T-cell (primary cell): ENCODE measurements at regions of chr7 and their contacts with region 1.

Region 1: GRCh38 chr7:144127703-144128334 is 4.8 kb downstream of the OR2A14 start:
- DNase-seq: peak; percentile 66 to 89 (median 81)
- ATAC-seq: peak; percentile 89 to 100 (median 94)
- H3K4me3 ChIP-seq: no peak overlapping the region
- H3K4me3 Mint-ChIP-seq: no peak overlapping the region
- H3K27ac ChIP-seq: no peak overlapping the region
- H3K27ac Mint-ChIP-seq: no peak overlapping the region
- H3K4me1 ChIP-seq: no peaks in the 10 kb centered on the region
- H3K4me1 Mint-ChIP-seq: no peaks in the 10 kb centered on the region
- H3K27me3 ChIP-seq: peaks cover 0 to 6% of the 10 kb centered on the region in 2 experiments
- H3K27me3 Mint-ChIP-seq: peaks cover 2 to 11% of the 10 kb centered on the region in 2 donors

Region 2: GRCh38 chr7:143248761-143249354 is 879.0 kb before region 1 on chr7:
- CTCF ChIA-PET with region 1: no interaction called
- POLR2A ChIA-PET with region 1: interaction called in 1 of 2 experiments, 14 read pairs
- DNase-seq: no peak
- ATAC-seq: no peak
- H3K4me3 ChIP-seq: no peak overlapping the region
- H3K4me3 Mint-ChIP-seq: peak overlapping the region in 1 of 3 donors; percentile 16
- H3K27ac ChIP-seq: no peak overlapping the region
- H3K27ac Mint-ChIP-seq: peak overlapping the region; percentile 84 to 89
- H3K4me1 ChIP-seq: peaks cover 46 to 51% of the 10 kb centered on the region in 2 experiments
- H3K4me1 Mint-ChIP-seq: peaks cover 91 to 97% (median 91%) of the 10 kb centered on the region in 3 donors
- H3K27me3 ChIP-seq: no peaks in the 10 kb centered on the region
- H3K27me3 Mint-ChIP-seq: no peaks in the 10 kb centered on the region

Region 3: GRCh38 chr7:144735505-144736276 is 607.9 kb after region 1 on chr7:
- CTCF ChIA-PET with region 1: no interaction called
- POLR2A ChIA-PET with region 1: no interaction called
- DNase-seq: no peak
- ATAC-seq: no peak
- H3K4me3 ChIP-seq: no peak overlapping the region
- H3K4me3 Mint-ChIP-seq: no peak overlapping the region
- H3K27ac ChIP-seq: no peak overlapping the region
- H3K27ac Mint-ChIP-seq: no peak overlapping the region
- H3K4me1 ChIP-seq: no peaks in the 10 kb centered on the region
- H3K4me1 Mint-ChIP-seq: peaks cover 2 to 6% (median 6%) of the 10 kb centered on the region in 3 donors
- H3K27me3 ChIP-seq: no peaks in the 10 kb centered on the region
- H3K27me3 Mint-ChIP-seq: no peaks in the 10 kb centered on the region